ENCODE measurements at regions of chr14 and their contacts with region 1.

Region 1: GRCh38 chr14:20164462-20164861 is 25.8 kb downstream of the OR4N5 start:
- DNase-seq: no peak

Region 2: GRCh38 chr14:20204721-20205120 is 40.3 kb after region 1 on chr14:
- intact Hi-C with region 1: loop called in 1 of 2 experiments (anchors 5 kb)
- DNase-seq: no peak

Measured in posterior vena cava (tissue), 2 donors.